ENCODE measurements at regions of chr14 and their contacts with region 1.

Region 1: GRCh38 chr14:54329082-54329695 is 67.6 kb upstream of the CDKN3 start:
- DNase-seq: peak; percentile 81
- H3K4me3 ChIP-seq: no peak overlapping the region
- H3K27ac ChIP-seq: peak overlapping the region; percentile 24
- H3K4me1 ChIP-seq: peaks cover 55% of the 10 kb centered on the region
- H3K27me3 ChIP-seq: no peaks in the 10 kb centered on the region
- CTCF ChIP-seq: peak; percentile 72 to 74
- POLR2A ChIP-seq: no peak

Region 2: GRCh38 chr14:53306267-53306721 is 1022.9 kb before region 1 on chr14:
- CTCF ChIA-PET with region 1: interaction called, 10 read pairs
- POLR2A ChIA-PET with region 1: no interaction called
- dilution Hi-C with region 1: no loop called
- intact Hi-C with region 1: no loop called
- DNase-seq: peak; percentile 56
- H3K4me3 ChIP-seq: peak overlapping the region; percentile 27 to 91 (median 41)
- H3K27ac ChIP-seq: no peak overlapping the region
- H3K4me1 ChIP-seq: no peaks in the 10 kb centered on the region
- H3K27me3 ChIP-seq: peaks cover 0 to 13% of the 10 kb centered on the region in 2 experiments
- CTCF ChIP-seq: peak; percentile 58 to 69
- POLR2A ChIP-seq: no peak

Region 3: DNA sequence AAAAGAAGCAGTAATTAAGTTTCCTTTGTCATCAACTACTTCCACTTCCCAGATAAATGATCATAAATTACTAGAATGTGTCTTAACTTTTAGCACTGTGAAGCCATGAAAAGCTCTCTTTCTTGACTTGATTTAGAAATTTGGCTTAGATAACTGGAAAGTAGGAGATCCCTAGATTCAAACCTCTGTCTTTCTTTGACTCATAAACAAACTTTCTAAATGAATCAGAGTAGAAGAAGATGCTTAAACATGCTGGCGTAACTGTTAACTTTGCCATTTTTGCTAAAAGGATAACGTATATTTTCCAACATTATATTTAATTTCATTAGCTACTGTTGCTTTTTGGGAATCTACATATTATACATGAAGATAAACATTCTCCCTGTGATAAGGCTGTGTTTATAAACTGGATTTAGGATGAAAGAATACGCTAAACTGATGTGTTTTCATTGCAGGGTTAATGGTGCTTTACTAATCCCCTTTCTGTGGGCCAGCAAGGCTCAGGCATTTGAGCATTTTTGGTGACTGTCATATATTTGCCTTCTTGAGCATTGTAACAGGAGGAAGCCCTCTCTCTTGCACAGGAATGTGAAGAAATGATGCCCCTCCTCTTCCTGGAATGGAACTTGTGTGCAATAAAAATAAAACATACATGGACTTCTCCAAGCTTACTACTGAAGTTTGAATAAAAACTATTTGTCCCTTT is 674.0 kb before region 1 on chr14:
- CTCF ChIA-PET with region 1: no interaction called
- POLR2A ChIA-PET with region 1: no interaction called
- dilution Hi-C with region 1: no loop called
- intact Hi-C with region 1: loop called (anchors 5 kb)
- DNase-seq: no peak
- H3K4me3 ChIP-seq: no peak overlapping the region
- H3K27ac ChIP-seq: no peak overlapping the region
- H3K4me1 ChIP-seq: peaks cover 17% of the 10 kb centered on the region
- H3K27me3 ChIP-seq: no peaks in the 10 kb centered on the region
- CTCF ChIP-seq: no peak
- POLR2A ChIP-seq: no peak

Region 4: GRCh38 chr14:53963320-53964227 is 365.6 kb before region 1 on chr14:
- CTCF ChIA-PET with region 1: interaction called, 80 read pairs
- POLR2A ChIA-PET with region 1: no interaction called
- dilution Hi-C with region 1: no loop called
- intact Hi-C with region 1: no loop called
- DNase-seq: peak; percentile 44
- H3K4me3 ChIP-seq: peak overlapping the region in 2 of 3 experiments; percentile 0 to 35
- H3K27ac ChIP-seq: no peak overlapping the region
- H3K4me1 ChIP-seq: peaks cover 4% of the 10 kb centered on the region
- H3K27me3 ChIP-seq: peaks cover 0 to 3% of the 10 kb centered on the region in 2 experiments
- CTCF ChIP-seq: peak; percentile 44 to 60
- POLR2A ChIP-seq: no peak

Region 5: DNA sequence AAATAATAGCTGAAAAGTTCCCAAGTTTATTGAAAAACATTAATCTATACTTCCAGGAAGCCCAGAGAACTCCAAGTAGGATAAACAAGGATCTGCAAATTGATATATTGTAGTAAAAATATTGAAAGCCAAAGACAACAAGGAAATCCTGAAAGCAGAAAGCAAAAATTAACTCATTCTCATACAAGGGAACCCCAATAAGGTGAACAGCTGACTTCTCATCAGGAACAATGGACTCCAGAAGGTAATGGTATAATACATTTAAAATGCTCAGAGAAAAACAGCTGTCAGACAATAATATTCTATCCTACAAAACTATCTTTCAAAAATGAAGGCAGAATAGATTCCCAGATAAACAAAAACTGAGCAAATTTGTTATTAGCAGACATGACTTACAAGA is 234.4 kb before region 1 on chr14:
- CTCF ChIA-PET with region 1: no interaction called
- POLR2A ChIA-PET with region 1: no interaction called
- dilution Hi-C with region 1: no loop called
- intact Hi-C with region 1: no loop called
- DNase-seq: no peak
- H3K4me3 ChIP-seq: no peak overlapping the region
- H3K27ac ChIP-seq: no peak overlapping the region
- H3K4me1 ChIP-seq: peaks cover 14% of the 10 kb centered on the region
- H3K27me3 ChIP-seq: no peaks in the 10 kb centered on the region
- CTCF ChIP-seq: no peak
- POLR2A ChIP-seq: no peak

Region 6: GRCh38 chr14:54138354-54139038 is 190.7 kb before region 1 on chr14:
- CTCF ChIA-PET with region 1: no interaction called
- POLR2A ChIA-PET with region 1: no interaction called
- dilution Hi-C with region 1: no loop called
- intact Hi-C with region 1: no loop called
- DNase-seq: no peak
- H3K4me3 ChIP-seq: no peak overlapping the region
- H3K27ac ChIP-seq: no peak overlapping the region
- H3K4me1 ChIP-seq: no peaks in the 10 kb centered on the region
- H3K27me3 ChIP-seq: no peaks in the 10 kb centered on the region
- CTCF ChIP-seq: no peak
- POLR2A ChIP-seq: no peak

Region 7: GRCh38 chr14:54182419-54183045 is 146.7 kb before region 1 on chr14:
- CTCF ChIA-PET with region 1: interaction called, 63 read pairs
- POLR2A ChIA-PET with region 1: no interaction called
- dilution Hi-C with region 1: no loop called
- intact Hi-C with region 1: no loop called
- DNase-seq: peak; percentile 75
- H3K4me3 ChIP-seq: no peak overlapping the region
- H3K27ac ChIP-seq: peak overlapping the region; percentile 25
- H3K4me1 ChIP-seq: peaks cover 26% of the 10 kb centered on the region
- H3K27me3 ChIP-seq: no peaks in the 10 kb centered on the region
- CTCF ChIP-seq: no peak
- POLR2A ChIP-seq: no peak

Region 8: GRCh38 chr14:54312140-54312801 is 16.9 kb before region 1 on chr14:
- CTCF ChIA-PET with region 1: interaction called, 30 read pairs
- POLR2A ChIA-PET with region 1: no interaction called
- dilution Hi-C with region 1: no loop called
- intact Hi-C with region 1: no loop called
- DNase-seq: peak; percentile 81
- H3K4me3 ChIP-seq: no peak overlapping the region
- H3K27ac ChIP-seq: peak overlapping the region; percentile 25
- H3K4me1 ChIP-seq: peaks cover 23% of the 10 kb centered on the region
- H3K27me3 ChIP-seq: no peaks in the 10 kb centered on the region
- CTCF ChIP-seq: no peak
- POLR2A ChIP-seq: no peak

Measured in endothelial cell of umbilical vein (primary cell).